Activated CD4-positive, alpha-beta memory T cell treated with anti-CD3 and anti-CD28 coated beads, Interleukin-2, amount 10 ng/mL, durations not matched to agents 7 days and 5 days (primary cell): ENCODE measurements at regions of chr2 and their contacts with region 1.

Region 1: GRCh38 chr2:85826990-85827878 is 61.6 kb downstream of the ST3GAL5 start:
- DNase-seq: peak; percentile 87
- H3K4me3 Mint-ChIP-seq: no peak overlapping the region
- H3K27ac Mint-ChIP-seq: no peak overlapping the region
- H3K4me1 Mint-ChIP-seq: peaks cover 33% of the 10 kb centered on the region
- H3K27me3 Mint-ChIP-seq: peaks cover 24% of the 10 kb centered on the region

Region 2: DNA sequence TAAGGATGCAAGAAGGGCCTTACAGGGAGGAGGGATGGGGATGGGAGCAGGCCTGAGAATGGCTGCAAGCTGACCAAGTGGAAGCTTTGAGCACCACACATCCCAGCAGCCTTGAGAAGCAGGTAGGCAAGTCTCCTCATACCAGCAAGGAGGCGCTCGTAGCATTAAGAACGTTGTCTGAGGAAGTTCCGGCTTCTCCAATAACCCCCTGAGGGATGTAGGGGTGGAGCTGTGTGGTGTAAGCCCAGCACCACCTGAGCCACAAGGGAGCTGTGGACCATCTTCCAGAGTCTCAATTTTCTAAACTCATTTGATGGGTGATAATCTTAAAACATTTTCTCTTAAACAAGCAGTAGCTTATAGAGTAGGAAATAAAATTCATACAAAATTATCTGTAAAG is 10.9 kb after region 1 on chr2:
- CTCF ChIA-PET with region 1: interaction called, 15 read pairs
- POLR2A ChIA-PET with region 1: interaction called, 5 read pairs
- DNase-seq: no peak
- H3K4me3 Mint-ChIP-seq: no peak overlapping the region
- H3K27ac Mint-ChIP-seq: no peak overlapping the region
- H3K4me1 Mint-ChIP-seq: peaks cover 20% of the 10 kb centered on the region
- H3K27me3 Mint-ChIP-seq: peaks cover 14% of the 10 kb centered on the region

Region 3: GRCh38 chr2:85865539-85866164 is 38.4 kb after region 1 on chr2:
- CTCF ChIA-PET with region 1: interaction called, 10 read pairs
- POLR2A ChIA-PET with region 1: interaction called, 4 read pairs
- DNase-seq: no peak
- H3K4me3 Mint-ChIP-seq: no peak overlapping the region
- H3K27ac Mint-ChIP-seq: no peak overlapping the region
- H3K4me1 Mint-ChIP-seq: peaks cover 64% of the 10 kb centered on the region
- H3K27me3 Mint-ChIP-seq: no peaks in the 10 kb centered on the region

Region 4: GRCh38 chr2:85911814-85912692 is 84.8 kb after region 1 on chr2:
- CTCF ChIA-PET with region 1: no interaction called
- POLR2A ChIA-PET with region 1: no interaction called
- DNase-seq: no peak
- H3K4me3 Mint-ChIP-seq: no peak overlapping the region
- H3K27ac Mint-ChIP-seq: no peak overlapping the region
- H3K4me1 Mint-ChIP-seq: no peaks in the 10 kb centered on the region
- H3K27me3 Mint-ChIP-seq: peaks cover 6% of the 10 kb centered on the region

Region 5: DNA sequence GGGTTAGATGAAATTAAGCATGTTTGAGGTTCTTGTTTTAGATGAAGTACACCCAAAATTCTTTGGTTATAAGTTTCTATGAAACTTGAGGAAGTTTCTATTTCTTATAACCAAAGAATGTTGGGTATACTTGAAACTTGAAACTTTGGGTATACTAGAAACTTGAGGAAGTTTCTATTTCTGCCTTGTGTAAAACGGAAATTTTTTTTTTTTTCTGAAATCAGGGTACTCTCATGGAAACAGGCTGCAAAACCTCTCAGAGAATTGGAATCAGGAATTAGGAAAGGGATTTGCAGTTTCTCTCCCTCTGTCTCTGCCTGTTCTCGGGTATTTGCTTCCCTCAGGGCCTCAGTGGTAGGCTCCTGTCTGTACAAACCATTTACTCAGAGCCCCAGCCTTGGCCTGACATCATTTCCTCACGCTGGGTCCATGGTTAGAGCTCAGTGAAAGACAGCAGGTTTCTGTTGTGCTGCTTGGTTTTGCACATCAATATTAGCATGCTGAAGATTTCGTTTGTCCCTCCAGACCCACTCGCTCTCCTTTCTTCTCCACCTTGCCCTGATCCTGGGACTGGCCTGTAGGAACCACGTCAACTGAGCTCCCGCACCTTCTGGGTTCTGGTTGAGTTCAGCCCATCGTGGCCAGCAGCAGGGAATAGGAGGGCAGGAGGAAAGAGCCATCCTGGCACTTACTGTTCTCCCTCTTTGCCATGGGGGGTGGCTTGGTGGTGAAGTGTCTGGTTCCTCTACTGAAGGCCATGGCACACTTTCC is 172.0 kb after region 1 on chr2:
- CTCF ChIA-PET with region 1: interaction called, 14 read pairs
- POLR2A ChIA-PET with region 1: interaction called, 5 read pairs
- DNase-seq: peak; percentile 74
- H3K4me3 Mint-ChIP-seq: peak overlapping the region; percentile 3
- H3K27ac Mint-ChIP-seq: peak overlapping the region; percentile 91
- H3K4me1 Mint-ChIP-seq: peaks cover 74% of the 10 kb centered on the region
- H3K27me3 Mint-ChIP-seq: no peaks in the 10 kb centered on the region

Region 6: GRCh38 chr2:86042256-86043168 is 215.3 kb after region 1 on chr2:
- CTCF ChIA-PET with region 1: interaction called, 71 read pairs
- POLR2A ChIA-PET with region 1: interaction called, 3 read pairs
- DNase-seq: peak; percentile 7
- H3K4me3 Mint-ChIP-seq: no peak overlapping the region
- H3K27ac Mint-ChIP-seq: peak overlapping the region; percentile 23
- H3K4me1 Mint-ChIP-seq: peaks cover 45% of the 10 kb centered on the region
- H3K27me3 Mint-ChIP-seq: no peaks in the 10 kb centered on the region

Region 7: GRCh38 chr2:86105252-86105968 is 278.2 kb after region 1 on chr2 and contains the start of gene POLR1A:
- CTCF ChIA-PET with region 1: interaction called, 10 read pairs
- POLR2A ChIA-PET with region 1: interaction called, 11 read pairs
- DNase-seq: peak; percentile 89
- H3K4me3 Mint-ChIP-seq: peak within 1 kb of the TSS; percentile 80
- H3K27ac Mint-ChIP-seq: peak within 1 kb of the TSS; percentile 92
- H3K4me1 Mint-ChIP-seq: peaks cover 58% of the 10 kb centered on the region
- H3K27me3 Mint-ChIP-seq: no peaks in the 10 kb centered on the region
- total RNA-seq, gene POLR1A: 25.2 to 29.7 TPM

Region 8: DNA sequence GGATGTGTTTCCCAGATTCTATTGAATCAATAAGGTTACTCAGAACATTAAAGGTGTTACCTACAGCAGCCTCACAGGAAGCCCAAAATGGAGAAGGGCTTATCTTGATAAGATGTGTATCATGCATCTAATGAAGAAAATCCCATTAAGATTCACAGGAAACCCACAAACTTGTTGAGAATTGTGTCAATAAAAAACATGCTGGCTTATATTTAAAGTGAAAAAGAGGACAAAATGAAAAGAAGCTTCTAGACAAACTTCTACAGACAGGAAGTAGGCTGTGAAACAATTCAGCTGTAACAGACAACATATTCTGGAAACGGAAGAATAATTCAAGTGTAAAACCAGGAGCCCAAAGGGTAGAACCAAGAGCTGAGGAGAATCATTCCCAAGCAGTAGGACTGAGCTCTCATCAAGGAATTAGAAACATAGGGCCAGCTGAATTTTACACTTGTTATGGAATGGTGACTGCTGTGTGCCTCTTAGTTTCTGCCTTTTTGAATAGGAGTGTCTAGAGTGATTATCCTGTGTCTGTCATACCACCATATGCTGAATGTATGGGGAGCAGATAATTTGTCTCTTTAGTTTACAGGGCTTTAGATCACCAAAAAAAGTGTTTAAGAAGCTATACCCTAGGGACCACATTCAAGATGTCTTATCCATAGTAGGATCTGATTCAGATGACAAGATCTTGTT is 358.4 kb after region 1 on chr2:
- CTCF ChIA-PET with region 1: no interaction called
- POLR2A ChIA-PET with region 1: no interaction called
- DNase-seq: no peak
- H3K4me3 Mint-ChIP-seq: peak overlapping the region; percentile 61
- H3K27ac Mint-ChIP-seq: peak overlapping the region; percentile 94
- H3K4me1 Mint-ChIP-seq: peaks cover 80% of the 10 kb centered on the region
- H3K27me3 Mint-ChIP-seq: no peaks in the 10 kb centered on the region